Breast epithelium (tissue), 4 donors: ENCODE measurements at regions of chr6 and their contacts with region 1.

Region 1: DNA sequence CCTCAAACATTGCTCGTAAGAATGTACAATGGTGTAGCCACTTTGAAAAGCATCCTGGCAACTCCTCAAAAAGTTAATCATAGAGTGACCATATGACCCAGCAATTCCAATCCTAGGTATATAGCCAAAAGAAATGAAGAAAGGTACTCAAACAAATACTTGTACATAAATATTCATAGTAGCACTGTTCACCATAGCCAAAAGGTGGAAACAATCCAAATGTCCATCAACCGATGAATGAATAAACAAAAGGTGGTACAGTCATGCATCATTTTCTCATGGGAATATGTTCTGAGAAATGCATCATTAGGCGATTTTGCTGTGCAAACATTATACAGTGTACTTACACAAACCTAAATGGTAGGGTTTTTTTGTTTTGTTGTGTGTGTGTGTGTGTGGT is 74.4 kb upstream of the TBC1D7 start:
- DNase-seq: no peak
- H3K4me3 ChIP-seq: no peak overlapping the region
- H3K27ac ChIP-seq: no peak overlapping the region
- H3K4me1 ChIP-seq: peaks cover 4 to 5% of the 10 kb centered on the region in 2 donors
- H3K27me3 ChIP-seq: no peaks in the 10 kb centered on the region
- CTCF ChIP-seq: no peak
- POLR2A ChIP-seq: no peak

Region 2: GRCh38 chr6:13487122-13488014 is 84.7 kb after region 1 on chr6 and contains the start of gene GFOD1:
- intact Hi-C with region 1: loop called (anchors 2 kb)
- DNase-seq: peak; percentile 73 to 81
- H3K4me3 ChIP-seq: peak within 1 kb of the TSS; percentile 75 to 95 (median 79)
- H3K27ac ChIP-seq: peak within 1 kb of the TSS; percentile 78 to 91
- H3K4me1 ChIP-seq: no peaks in the 10 kb centered on the region
- H3K27me3 ChIP-seq: no peaks in the 10 kb centered on the region
- CTCF ChIP-seq: peak in 1 of 3 donors; percentile 22
- POLR2A ChIP-seq: no peak
- total RNA-seq, gene GFOD1: 11.6 to 33.3 (median 23.3) TPM